Activated CD4-positive, alpha-beta T cell treated with anti-CD3 and anti-CD28 coated beads for 36 hours (primary cell): ENCODE measurements at regions of chr10 and their contacts with region 1.

Region 1: DNA sequence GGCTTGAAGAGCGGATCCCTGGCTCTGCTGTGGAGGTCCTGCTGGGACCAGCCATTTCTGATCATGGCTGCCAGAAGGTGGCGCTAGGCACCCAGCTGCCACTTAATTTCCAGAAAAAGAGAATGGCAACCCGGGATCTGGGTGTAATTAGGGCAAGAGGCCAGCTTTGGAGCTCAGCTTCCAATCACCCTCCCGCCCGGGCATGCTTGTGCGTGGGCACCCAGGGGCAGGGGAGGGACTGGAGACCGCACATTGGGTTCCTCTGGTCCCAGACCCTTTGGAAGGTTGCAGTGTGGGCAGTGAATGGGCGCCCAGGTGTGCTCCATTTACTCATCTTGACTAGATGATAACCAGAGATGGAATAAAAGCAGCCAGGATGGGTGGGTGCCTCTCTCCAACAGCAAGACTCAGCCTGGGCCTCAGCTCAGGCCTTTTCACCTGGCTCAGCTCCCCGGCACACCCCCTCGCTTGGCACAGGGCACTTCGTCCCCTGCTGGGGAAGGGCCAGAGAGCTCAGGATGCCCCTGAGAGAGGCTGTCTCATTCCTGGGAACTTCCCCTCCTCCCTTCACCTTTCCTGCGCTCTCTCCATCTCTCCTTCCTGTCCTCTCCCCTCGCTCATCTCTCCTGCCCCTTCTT is 14.7 kb downstream of the FAM241B start:
- DNase-seq: peak; percentile 73
- ATAC-seq: peak; percentile 30
- H3K4me3 Mint-ChIP-seq: no peak overlapping the region
- H3K27ac Mint-ChIP-seq: no peak overlapping the region
- H3K4me1 Mint-ChIP-seq: no peaks in the 10 kb centered on the region
- H3K27me3 Mint-ChIP-seq: no peaks in the 10 kb centered on the region

Region 2: GRCh38 chr10:69800109-69800508 is 155.3 kb after region 1 on chr10:
- CTCF ChIA-PET with region 1: no interaction called
- POLR2A ChIA-PET with region 1: no interaction called
- intact Hi-C with region 1: loop called (anchors 1 to 10 kb)
- DNase-seq: peak; percentile 32
- ATAC-seq: no peak
- H3K4me3 Mint-ChIP-seq: no peak overlapping the region
- H3K27ac Mint-ChIP-seq: no peak overlapping the region
- H3K4me1 Mint-ChIP-seq: peaks cover 8% of the 10 kb centered on the region
- H3K27me3 Mint-ChIP-seq: peaks cover 43% of the 10 kb centered on the region

Region 3: DNA sequence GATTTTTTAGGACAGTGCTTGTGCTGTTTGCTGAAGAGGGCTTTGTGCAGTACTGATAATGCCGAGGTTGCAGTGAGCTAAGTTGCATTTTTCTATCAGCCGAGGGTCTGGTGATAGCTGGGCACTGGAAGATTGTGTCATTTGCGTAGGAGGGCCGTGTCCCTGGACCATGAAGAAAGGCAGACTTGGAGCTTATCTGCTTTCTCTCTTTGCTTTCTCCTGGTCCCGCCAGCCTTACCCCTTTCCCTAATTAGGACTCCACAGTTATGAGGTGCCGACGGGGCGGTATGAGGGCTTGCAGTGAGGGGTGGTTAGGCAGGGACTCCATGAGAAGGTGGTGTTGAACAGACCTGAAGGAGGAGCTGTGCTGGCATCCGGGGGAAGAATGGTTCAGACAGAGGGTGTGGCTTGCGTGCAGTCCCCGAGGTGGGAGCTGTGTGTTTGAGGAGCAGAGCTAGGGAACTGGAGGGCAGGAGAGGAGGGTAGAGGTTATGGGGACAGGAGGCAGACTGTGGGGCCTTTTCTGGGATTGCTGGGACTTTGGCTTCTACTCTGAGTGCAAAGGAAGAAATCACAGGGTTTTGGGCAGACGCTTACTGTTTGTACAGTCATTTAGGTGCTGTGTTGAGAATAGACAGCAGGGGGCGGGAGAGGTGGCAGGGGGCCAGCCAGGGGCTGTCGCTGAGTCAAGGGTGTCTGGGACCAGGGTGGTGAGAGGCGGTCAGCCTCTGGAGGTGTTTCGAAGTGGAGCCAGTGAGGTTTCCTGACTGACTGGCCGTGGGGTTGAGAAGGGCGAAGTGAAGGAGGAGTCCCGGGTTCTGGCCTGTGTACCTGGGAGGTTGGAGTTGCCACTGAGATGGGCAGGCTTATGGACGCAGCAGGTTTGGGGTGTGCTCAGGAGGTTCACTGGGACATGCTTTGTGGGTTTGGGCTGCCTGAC is 914.4 kb after region 1 on chr10:
- CTCF ChIA-PET with region 1: no interaction called
- POLR2A ChIA-PET with region 1: no interaction called
- intact Hi-C with region 1: no loop called
- DNase-seq: peak; percentile 87
- ATAC-seq: peak; percentile 95
- H3K4me3 Mint-ChIP-seq: peak overlapping the region; percentile 60
- H3K27ac Mint-ChIP-seq: peak overlapping the region; percentile 23
- H3K4me1 Mint-ChIP-seq: peaks cover 12% of the 10 kb centered on the region
- H3K27me3 Mint-ChIP-seq: no peaks in the 10 kb centered on the region